ENCODE measurements at regions of chr17 and their contacts with region 1.

Region 1: GRCh38 chr17:38982858-38983746 is 15.9 kb upstream of the FBXO47 start:
- DNase-seq: peak; percentile 58 to 67 (median 59)
- H3K4me3 ChIP-seq: no peak overlapping the region
- H3K4me3 Mint-ChIP-seq: no peak overlapping the region
- H3K27ac ChIP-seq: no peak overlapping the region
- H3K27ac Mint-ChIP-seq: no peak overlapping the region
- H3K4me1 ChIP-seq: no peaks in the 10 kb centered on the region
- H3K4me1 Mint-ChIP-seq: peaks cover 0 to 4% (median 2%) of the 10 kb centered on the region in 4 donors
- H3K27me3 ChIP-seq: no peaks in the 10 kb centered on the region
- H3K27me3 Mint-ChIP-seq: peaks cover 0 to 1% of the 10 kb centered on the region in 2 donors

Region 2: GRCh38 chr17:38908676-38909181 is 74.4 kb before region 1 on chr17:
- CTCF ChIA-PET with region 1: no interaction called
- POLR2A ChIA-PET with region 1: no interaction called
- intact Hi-C with region 1: no loop called
- DNase-seq: no peak
- H3K4me3 ChIP-seq: no peak overlapping the region
- H3K4me3 Mint-ChIP-seq: no peak overlapping the region
- H3K27ac ChIP-seq: no peak overlapping the region
- H3K27ac Mint-ChIP-seq: peak overlapping the region in 3 of 7 donors; percentile 18 to 77 (median 51)
- H3K4me1 ChIP-seq: peaks cover 17% of the 10 kb centered on the region
- H3K4me1 Mint-ChIP-seq: peaks cover 9 to 46% (median 26%) of the 10 kb centered on the region in 4 donors
- H3K27me3 ChIP-seq: no peaks in the 10 kb centered on the region
- H3K27me3 Mint-ChIP-seq: no peaks in the 10 kb centered on the region

Region 3: GRCh38 chr17:38994026-38994425 is 10.9 kb after region 1 on chr17:
- CTCF ChIA-PET with region 1: interaction called, 13 read pairs
- POLR2A ChIA-PET with region 1: no interaction called
- intact Hi-C with region 1: no loop called
- DNase-seq: no peak
- H3K4me3 ChIP-seq: no peak overlapping the region
- H3K4me3 Mint-ChIP-seq: no peak overlapping the region
- H3K27ac ChIP-seq: no peak overlapping the region
- H3K27ac Mint-ChIP-seq: no peak overlapping the region
- H3K4me1 ChIP-seq: no peaks in the 10 kb centered on the region
- H3K4me1 Mint-ChIP-seq: no peaks in the 10 kb centered on the region
- H3K27me3 ChIP-seq: no peaks in the 10 kb centered on the region
- H3K27me3 Mint-ChIP-seq: peaks cover 0 to 1% of the 10 kb centered on the region in 2 donors

Region 4: DNA sequence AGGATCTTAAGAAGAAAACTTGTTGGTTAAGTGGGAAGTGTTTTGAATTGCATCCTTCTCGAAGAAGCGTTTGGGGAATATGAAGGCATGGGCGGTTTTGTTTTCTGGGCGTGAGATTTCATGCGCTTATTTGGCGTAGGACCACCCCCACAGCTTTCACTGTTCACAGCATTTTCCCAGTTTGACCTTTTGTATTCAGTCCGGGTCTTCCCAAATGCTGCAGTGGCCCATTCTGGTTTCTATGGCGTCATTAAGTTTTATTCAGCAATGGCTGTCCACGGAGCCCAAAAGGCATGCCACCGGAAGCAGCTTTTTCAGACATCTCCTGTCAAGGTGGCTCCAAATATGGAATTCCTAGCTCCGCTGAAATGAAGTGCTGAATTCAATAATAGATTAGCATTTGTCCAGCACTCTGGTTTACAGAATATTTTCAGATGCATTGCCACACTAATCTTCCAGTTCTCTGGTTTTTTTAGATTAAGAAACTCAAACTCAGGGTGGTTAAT is 74.7 kb after region 1 on chr17:
- CTCF ChIA-PET with region 1: interaction called, 7 read pairs
- POLR2A ChIA-PET with region 1: no interaction called
- intact Hi-C with region 1: loop called (anchors 1 kb)
- DNase-seq: no peak
- H3K4me3 ChIP-seq: peak overlapping the region in 1 of 2 donors; percentile 64
- H3K4me3 Mint-ChIP-seq: peak overlapping the region in 7 of 8 donors; percentile 77 to 88 (median 84)
- H3K27ac ChIP-seq: no peak overlapping the region
- H3K27ac Mint-ChIP-seq: peak overlapping the region in 1 of 7 donors; percentile 66
- H3K4me1 ChIP-seq: no peaks in the 10 kb centered on the region
- H3K4me1 Mint-ChIP-seq: peaks cover 2 to 20% (median 6%) of the 10 kb centered on the region in 4 donors
- H3K27me3 ChIP-seq: no peaks in the 10 kb centered on the region
- H3K27me3 Mint-ChIP-seq: no peaks in the 10 kb centered on the region

Region 5: DNA sequence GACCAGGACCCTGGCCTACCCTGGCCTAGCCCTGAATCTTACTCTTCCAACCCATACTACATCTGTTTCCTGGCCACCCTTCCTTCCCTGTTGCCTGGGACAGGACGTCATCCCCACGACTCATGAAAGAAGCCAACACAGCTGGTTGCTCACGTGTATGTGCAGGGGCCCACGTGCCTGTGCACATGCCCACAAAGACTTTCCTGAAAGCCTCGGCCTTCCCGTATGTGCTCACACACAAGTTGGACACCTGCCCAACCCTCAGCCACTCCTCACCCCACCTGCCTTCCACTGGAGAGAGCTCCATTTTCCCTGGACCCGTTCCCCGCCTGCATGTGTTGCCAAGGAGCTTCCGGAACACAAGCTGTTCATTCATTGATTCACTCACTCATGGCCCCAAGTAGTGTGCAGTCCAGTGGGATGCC is 161.3 kb after region 1 on chr17:
- CTCF ChIA-PET with region 1: interaction called, 289 read pairs
- POLR2A ChIA-PET with region 1: no interaction called
- intact Hi-C with region 1: no loop called
- DNase-seq: no peak
- H3K4me3 ChIP-seq: no peak overlapping the region
- H3K4me3 Mint-ChIP-seq: no peak overlapping the region
- H3K27ac ChIP-seq: no peak overlapping the region
- H3K27ac Mint-ChIP-seq: peak overlapping the region in 1 of 7 donors; percentile 8
- H3K4me1 ChIP-seq: no peaks in the 10 kb centered on the region
- H3K4me1 Mint-ChIP-seq: peaks cover 5 to 15% (median 5%) of the 10 kb centered on the region in 4 donors
- H3K27me3 ChIP-seq: no peaks in the 10 kb centered on the region
- H3K27me3 Mint-ChIP-seq: no peaks in the 10 kb centered on the region

Region 6: DNA sequence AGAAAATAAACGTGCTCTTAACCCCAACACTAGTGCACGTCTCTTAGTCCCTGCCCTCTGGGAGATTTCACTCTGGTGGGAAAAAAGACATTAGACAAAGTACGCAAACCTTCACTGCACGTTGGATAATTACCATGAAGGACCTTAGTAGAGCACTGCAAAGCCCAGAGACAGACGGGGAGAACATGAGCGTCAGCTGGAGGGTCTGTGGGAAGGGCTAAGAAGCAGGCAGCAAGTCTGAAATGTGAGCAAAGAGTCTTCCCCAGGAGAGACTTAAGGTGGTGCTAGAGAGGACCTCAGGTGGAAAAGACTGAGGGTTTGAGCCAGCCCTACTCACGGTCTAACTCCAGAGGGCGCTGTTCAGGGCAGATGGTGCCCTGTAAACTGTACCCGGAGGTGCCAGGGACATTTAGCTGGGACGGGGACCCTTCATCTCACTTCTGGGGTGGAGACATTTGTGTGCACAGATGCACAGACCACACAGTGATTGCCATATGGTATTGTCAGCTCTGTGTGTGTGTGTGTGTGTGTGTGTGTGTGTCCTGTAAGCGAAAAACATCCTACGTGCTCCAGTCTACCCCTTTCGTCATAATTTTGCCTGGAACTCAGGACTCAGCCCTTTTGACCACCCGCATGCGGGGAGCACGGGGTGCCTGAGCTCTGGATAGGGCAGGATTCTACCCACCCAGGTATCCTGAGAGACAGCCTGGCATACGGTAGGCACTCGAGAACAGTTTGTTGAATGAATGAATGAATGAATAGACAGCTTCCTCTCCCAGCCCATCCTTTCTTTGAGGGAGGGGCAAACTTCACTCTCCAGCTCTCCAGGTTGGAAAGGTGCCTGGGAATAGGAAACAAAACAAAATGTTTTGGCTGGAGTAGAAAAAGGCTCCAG is 252.7 kb after region 1 on chr17:
- CTCF ChIA-PET with region 1: interaction called, 16 read pairs
- POLR2A ChIA-PET with region 1: no interaction called
- intact Hi-C with region 1: loop called (anchors 1 kb)
- DNase-seq: peak; percentile 53 to 66 (median 56)
- H3K4me3 ChIP-seq: no peak overlapping the region
- H3K4me3 Mint-ChIP-seq: peak overlapping the region in 2 of 8 donors; percentile 50 to 73
- H3K27ac ChIP-seq: no peak overlapping the region
- H3K27ac Mint-ChIP-seq: peak overlapping the region; percentile 61 to 93 (median 82)
- H3K4me1 ChIP-seq: peaks cover 43% of the 10 kb centered on the region
- H3K4me1 Mint-ChIP-seq: peaks cover 31 to 45% (median 38%) of the 10 kb centered on the region in 4 donors
- H3K27me3 ChIP-seq: no peaks in the 10 kb centered on the region
- H3K27me3 Mint-ChIP-seq: peaks cover 4 to 11% of the 10 kb centered on the region in 2 donors